Dorsolateral prefrontal cortex (tissue), 120 donors: ENCODE measurements at regions of chr15 and their contacts with region 1.

Region 1: DNA sequence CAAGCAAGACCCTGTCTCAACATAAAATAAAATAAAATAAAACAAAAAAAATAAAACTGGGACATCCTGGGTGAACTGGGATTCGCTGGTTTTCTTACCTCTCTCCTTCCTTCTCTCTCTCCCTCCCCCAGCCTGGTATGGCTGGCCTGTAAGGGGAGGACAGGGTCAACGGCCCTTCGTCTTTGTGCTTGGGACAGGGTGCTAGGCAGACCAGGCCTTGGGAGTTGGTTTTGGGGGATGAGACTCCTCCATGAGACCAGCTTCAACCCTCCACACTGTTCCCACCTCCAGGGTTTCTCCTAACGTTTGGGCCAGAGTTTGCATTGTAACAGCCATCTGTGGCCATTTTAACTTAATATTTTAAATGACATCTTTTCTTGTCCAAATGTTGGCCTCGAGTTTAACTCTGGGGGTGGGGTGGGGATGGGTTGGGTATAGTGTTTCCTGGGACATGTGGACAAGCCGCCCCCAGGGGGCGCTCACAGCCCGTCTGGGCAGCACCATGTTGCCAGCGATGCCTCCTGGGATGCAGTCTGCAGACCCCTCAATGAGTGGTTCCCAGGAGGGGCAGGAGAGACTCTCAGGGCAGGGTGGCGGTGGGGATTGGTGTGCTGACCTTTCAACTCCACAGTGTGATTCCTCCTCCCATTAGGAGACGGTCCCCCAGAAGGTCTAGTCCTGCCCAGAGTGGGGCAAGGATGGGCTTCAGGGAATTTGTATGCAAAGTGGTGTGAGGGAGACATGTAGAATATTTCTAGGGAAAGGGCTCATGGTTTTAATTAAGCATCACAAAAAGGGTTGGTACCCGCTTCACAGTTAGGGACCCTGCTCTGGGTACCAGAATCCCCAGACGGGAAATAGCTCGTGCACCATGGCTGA is 37.7 kb upstream of the LCTL start:
- DNase-seq: peak in 4 of 10 donors; percentile 18 to 50 (median 46)
- H3K4me3 ChIP-seq: no peak overlapping the region
- H3K27ac ChIP-seq: no peak overlapping the region
- H3K27me3 ChIP-seq: peaks cover 0 to 8% (median 0%) of the 10 kb centered on the region in 45 donors
- CTCF ChIP-seq: peak; percentile 13 to 80 (median 66)

Region 2: GRCh38 chr15:65690778-65691177 is 912.8 kb before region 1 on chr15:
- intact Hi-C with region 1: no loop called
- DNase-seq: no peak
- H3K4me3 ChIP-seq: no peak overlapping the region
- H3K27ac ChIP-seq: no peak overlapping the region
- H3K27me3 ChIP-seq: no peaks in the 10 kb centered on the region
- CTCF ChIP-seq: no peak

Region 3: GRCh38 chr15:66654739-66655375 is 51.3 kb after region 1 on chr15:
- intact Hi-C with region 1: no loop called
- DNase-seq: no peak
- H3K4me3 ChIP-seq: peak overlapping the region in 15 of 59 donors; percentile 10 to 39 (median 24)
- H3K27ac ChIP-seq: peak overlapping the region in 19 of 59 donors; percentile 0 to 71 (median 48)
- H3K27me3 ChIP-seq: peaks cover 0 to 27% (median 9%) of the 10 kb centered on the region in 45 donors
- CTCF ChIP-seq: no peak

Region 4: GRCh38 chr15:66774001-66774814 is 170.7 kb after region 1 on chr15:
- intact Hi-C with region 1: loop called in 1 of 2 experiments (anchors 5 kb)
- DNase-seq: peak in 9 of 10 donors; percentile 21 to 79 (median 57)
- H3K4me3 ChIP-seq: peak overlapping the region in 3 of 59 donors; percentile 7 to 19 (median 15)
- H3K27ac ChIP-seq: peak overlapping the region in 41 of 59 donors; percentile 0 to 77 (median 48)
- H3K27me3 ChIP-seq: no peaks in the 10 kb centered on the region
- CTCF ChIP-seq: peak; percentile 69 to 94 (median 85)

Region 5: GRCh38 chr15:66851226-66852071 is 247.9 kb after region 1 on chr15:
- intact Hi-C with region 1: loop called in 1 of 2 experiments (anchors 2 kb)
- DNase-seq: peak in 8 of 10 donors; percentile 40 to 72 (median 49)
- H3K4me3 ChIP-seq: peak overlapping the region in 10 of 59 donors; percentile 4 to 28 (median 21)
- H3K27ac ChIP-seq: no peak overlapping the region
- H3K27me3 ChIP-seq: no peaks in the 10 kb centered on the region
- CTCF ChIP-seq: peak; percentile 53 to 93 (median 86)

Region 6: DNA sequence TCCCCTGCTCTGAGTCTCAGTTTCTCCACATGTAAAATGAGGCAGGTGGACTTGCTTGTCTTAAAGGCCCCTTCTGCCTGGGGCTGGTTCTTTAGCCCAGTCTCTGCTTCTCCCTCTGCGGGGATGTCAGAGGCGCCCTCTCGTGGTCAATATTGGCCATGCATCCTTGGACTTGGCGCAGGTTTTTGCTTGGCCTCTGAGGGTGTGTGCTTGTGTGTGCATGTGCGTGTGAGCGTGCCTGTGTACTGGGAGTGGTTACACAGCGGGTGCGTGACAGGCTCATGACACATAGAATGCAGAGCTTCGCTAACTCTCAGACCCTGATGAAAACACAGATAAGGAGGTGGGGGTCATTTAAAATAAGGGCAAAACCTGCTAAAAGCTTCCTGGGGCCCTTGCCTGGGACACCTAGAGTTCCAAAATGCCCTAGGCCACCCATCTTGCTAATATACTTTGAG is 259.4 kb after region 1 on chr15:
- intact Hi-C with region 1: loop called in 1 of 2 experiments (anchors 10 kb)
- DNase-seq: peak in 9 of 10 donors; percentile 38 to 71 (median 58)
- H3K4me3 ChIP-seq: no peak overlapping the region
- H3K27ac ChIP-seq: no peak overlapping the region
- H3K27me3 ChIP-seq: peaks cover 0 to 8% (median 0%) of the 10 kb centered on the region in 45 donors
- CTCF ChIP-seq: peak; percentile 57 to 90 (median 78)